GM10248 (cell line): ENCODE measurements at regions of chr4 and their contacts with region 1.

Region 1: GRCh38 chr4:102598086-102598761 is 97.1 kb downstream of the NFKB1 start:
- DNase-seq: no peak
- CTCF ChIP-seq: no peak

Region 2: GRCh38 chr4:102586644-102587021 is 11.6 kb before region 1 on chr4:
- CTCF ChIA-PET with region 1: interaction called, 12 read pairs
- POLR2A ChIA-PET with region 1: no interaction called
- DNase-seq: no peak
- CTCF ChIP-seq: no peak

Region 3: GRCh38 chr4:102849579-102850104 is 251.4 kb after region 1 on chr4:
- CTCF ChIA-PET with region 1: no interaction called
- POLR2A ChIA-PET with region 1: no interaction called
- DNase-seq: no peak
- CTCF ChIP-seq: no peak